Activated CD4-positive, alpha-beta memory T cell treated with anti-CD3 and anti-CD28 coated beads for 36 hours (primary cell): ENCODE measurements at regions of chr7 and their contacts with region 1.

Region 1: GRCh38 chr7:92584996-92585395 is 5.2 kb downstream of the FAM133B start:
- DNase-seq: no peak
- H3K4me3 Mint-ChIP-seq: no peak overlapping the region
- H3K27ac Mint-ChIP-seq: peak overlapping the region; percentile 76
- H3K4me1 Mint-ChIP-seq: peaks cover 58% of the 10 kb centered on the region
- H3K27me3 Mint-ChIP-seq: no peaks in the 10 kb centered on the region

Region 2: DNA sequence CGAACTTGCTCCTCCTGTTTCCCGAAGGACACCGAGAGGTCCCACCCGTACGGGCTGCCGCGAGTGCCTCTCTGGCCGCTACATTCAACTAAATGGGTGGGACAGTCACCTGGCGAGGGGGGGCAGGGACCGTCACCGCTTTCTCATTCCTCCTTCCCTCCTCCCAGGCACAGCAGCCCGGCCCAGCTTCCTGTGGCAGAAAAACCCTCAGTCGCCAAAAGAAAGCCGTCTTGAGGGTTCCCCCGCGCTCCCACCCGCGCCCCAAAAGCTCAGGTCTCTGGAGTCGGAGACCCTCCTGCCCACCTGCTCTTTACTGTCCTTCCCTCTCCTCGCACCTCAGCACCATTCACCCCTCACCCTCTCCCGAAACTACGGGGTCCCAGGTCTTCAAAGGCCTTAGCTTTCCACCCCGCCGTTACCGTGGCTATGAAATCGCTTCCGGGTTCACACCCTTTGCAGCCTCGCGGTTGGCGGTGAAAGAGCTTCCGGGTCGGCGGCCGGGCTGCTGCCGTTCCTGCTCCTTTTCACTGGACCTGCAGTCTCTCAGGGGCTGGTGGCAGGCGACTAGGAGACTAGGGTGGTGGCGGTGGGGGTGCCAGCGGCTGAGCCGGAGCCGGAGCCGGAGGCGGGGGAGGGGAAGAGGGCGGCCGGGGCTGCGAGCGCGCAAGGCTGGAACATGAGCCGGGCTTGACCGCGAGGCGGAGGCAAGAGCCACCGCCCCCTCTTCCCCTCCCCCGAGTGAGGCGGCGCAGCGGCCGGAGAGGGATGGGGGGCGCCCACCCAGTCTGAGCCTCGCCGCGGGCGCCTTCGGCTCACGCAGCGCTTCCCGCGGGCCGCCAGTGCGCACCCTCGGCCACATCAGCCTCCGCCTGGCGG is 339.3 kb before region 1 on chr7 and contains the starts of genes ANKIB1 and KRIT1:
- CTCF ChIA-PET with region 1: no interaction called
- POLR2A ChIA-PET with region 1: no interaction called
- intact Hi-C with region 1: loop called (anchors 5 kb)
- DNase-seq: peak; percentile 92
- H3K4me3 Mint-ChIP-seq: peak within 1 kb of the TSS; percentile 99
- H3K27ac Mint-ChIP-seq: peak within 1 kb of the TSS; percentile 100
- H3K4me1 Mint-ChIP-seq: peaks cover 29% of the 10 kb centered on the region
- H3K27me3 Mint-ChIP-seq: no peaks in the 10 kb centered on the region
- total RNA-seq, gene ANKIB1: 34.8 to 39.9 TPM
- total RNA-seq, gene KRIT1: 29.2 to 29.3 TPM

Region 3: DNA sequence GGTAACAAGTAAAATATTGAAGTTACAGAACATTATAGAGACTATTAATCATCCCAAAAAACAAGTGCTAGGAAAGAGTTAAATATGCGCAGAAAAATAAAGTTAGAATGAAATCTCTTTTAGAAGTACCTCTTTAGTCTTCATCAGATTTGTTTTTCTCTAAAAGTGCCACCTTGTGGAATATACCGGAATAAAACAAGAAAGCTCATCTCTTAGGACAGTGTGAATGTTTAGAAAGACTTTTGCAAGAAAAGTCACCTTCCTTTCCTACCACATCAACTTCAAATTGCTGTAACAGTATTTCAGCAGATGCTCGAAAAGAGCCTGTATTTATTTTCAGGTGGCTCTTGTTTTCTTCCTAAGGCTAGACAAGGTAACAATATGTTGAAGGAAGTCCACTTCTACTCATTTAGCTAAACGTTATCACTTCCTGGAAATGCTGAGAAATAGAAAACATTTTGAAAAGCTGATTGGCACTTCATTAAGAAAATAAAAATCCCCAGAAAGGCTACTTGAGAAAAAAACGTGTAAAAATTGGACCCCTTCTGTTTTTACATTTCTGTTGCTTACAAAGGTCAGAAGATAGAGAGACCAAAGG is 25.0 kb after region 1 on chr7:
- CTCF ChIA-PET with region 1: interaction called, 14 read pairs
- POLR2A ChIA-PET with region 1: interaction called, 8 read pairs
- intact Hi-C with region 1: loop called (anchors 1 kb)
- DNase-seq: no peak
- H3K4me3 Mint-ChIP-seq: no peak overlapping the region
- H3K27ac Mint-ChIP-seq: peak overlapping the region; percentile 40
- H3K4me1 Mint-ChIP-seq: peaks cover 37% of the 10 kb centered on the region
- H3K27me3 Mint-ChIP-seq: no peaks in the 10 kb centered on the region